WTC11 (cell line): ENCODE measurements at regions of chr13 and their contacts with region 1.

Region 1: DNA sequence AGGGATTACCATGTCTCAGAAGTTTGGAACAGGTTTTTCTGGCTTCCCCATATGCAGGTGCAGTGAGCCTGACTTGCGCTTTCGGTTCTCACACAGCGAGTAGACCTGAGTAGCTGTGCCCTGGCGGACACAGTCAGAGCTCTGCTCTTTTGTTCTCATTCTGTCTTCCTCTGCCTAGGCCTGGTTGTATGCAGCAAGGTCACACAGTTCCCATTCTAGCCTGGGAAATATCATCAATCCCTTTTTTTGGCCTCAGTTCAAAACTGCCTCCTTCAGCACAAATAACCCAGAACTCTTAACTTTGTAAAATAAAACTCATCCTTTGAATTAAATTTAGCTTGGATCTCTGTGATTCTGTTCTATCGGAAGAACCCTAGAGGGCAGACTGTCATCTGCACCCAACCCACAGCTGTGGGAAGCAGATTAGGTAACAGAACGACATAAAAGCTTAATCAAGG is 10.2 kb downstream of the OXGR1 start:
- DNase-seq: peak; percentile 34
- ATAC-seq: peak; percentile 100
- H3K4me3 Mint-ChIP-seq: peak overlapping the region; percentile 42
- H3K27ac Mint-ChIP-seq: no peak overlapping the region; the same call in 1 of the 2 replicates
- H3K4me1 Mint-ChIP-seq: peaks cover 12% of the 10 kb centered on the region
- H3K27me3 Mint-ChIP-seq: no peaks in the 10 kb centered on the region
- CTCF ChIP-seq: no peak

Region 2: GRCh38 chr13:96967248-96967745 is 16.8 kb before region 1 on chr13:
- CTCF ChIA-PET with region 1: interaction called, 20 read pairs
- POLR2A ChIA-PET with region 1: no interaction called
- DNase-seq: no peak
- ATAC-seq: peak; percentile 58
- H3K4me3 Mint-ChIP-seq: no peak overlapping the region
- H3K27ac Mint-ChIP-seq: no peak overlapping the region
- H3K4me1 Mint-ChIP-seq: peaks cover 4% of the 10 kb centered on the region; the same call in 1 of the 2 replicates
- H3K27me3 Mint-ChIP-seq: peaks cover 6% of the 10 kb centered on the region
- CTCF ChIP-seq: 0 out of 2 replicates have a peak, but pooled peaks have one; percentile 24

Region 3: GRCh38 chr13:96994017-96994857 is 10.2 kb after region 1 on chr13 and contains the start of gene OXGR1:
- CTCF ChIA-PET with region 1: interaction called, 10 read pairs
- POLR2A ChIA-PET with region 1: no interaction called
- DNase-seq: peak; percentile 29
- ATAC-seq: peak; percentile 75
- H3K4me3 Mint-ChIP-seq: peak within 1 kb of the TSS; percentile 78
- H3K27ac Mint-ChIP-seq: no peak within 1 kb of the TSS
- H3K4me1 Mint-ChIP-seq: peaks cover 19% of the 10 kb centered on the region
- H3K27me3 Mint-ChIP-seq: peaks cover 84% of the 10 kb centered on the region
- CTCF ChIP-seq: no peak
- total RNA-seq, gene OXGR1: 0.21 to 0.71 TPM (median 0.39 TPM) in 3 replicates

Region 4: GRCh38 chr13:97018029-97018831 is 34.1 kb after region 1 on chr13:
- CTCF ChIA-PET with region 1: interaction called, 15 read pairs
- POLR2A ChIA-PET with region 1: no interaction called
- DNase-seq: peak; percentile 29
- ATAC-seq: peak; percentile 97
- H3K4me3 Mint-ChIP-seq: peak overlapping the region; percentile 52
- H3K27ac Mint-ChIP-seq: no peak overlapping the region
- H3K4me1 Mint-ChIP-seq: peaks cover 8% of the 10 kb centered on the region
- H3K27me3 Mint-ChIP-seq: peaks cover 6% of the 10 kb centered on the region
- CTCF ChIP-seq: peak; percentile 48